ENCODE measurements at regions of chr15 and their contacts with region 1.

Region 1: DNA sequence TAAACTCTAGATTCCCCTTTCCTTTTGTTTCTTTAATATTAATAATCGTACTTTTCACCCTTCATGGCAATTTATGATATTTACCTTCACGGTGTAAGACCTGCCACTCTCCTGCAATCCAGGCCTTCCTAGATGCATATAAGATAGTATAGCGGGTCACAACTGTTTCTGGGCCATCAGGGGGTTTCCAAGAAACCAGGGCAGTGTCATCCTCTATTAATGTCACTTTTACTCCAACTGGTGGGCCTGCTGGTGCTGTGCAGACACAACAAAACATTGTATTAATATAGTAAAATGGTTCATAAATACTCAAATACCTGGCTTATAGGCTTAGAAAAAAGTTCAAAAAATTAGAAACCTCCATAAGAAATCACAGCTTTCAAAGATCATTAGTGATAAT is 48.9 kb upstream of the PYGO1 start:
- DNase-seq: no peak
- H3K4me3 ChIP-seq: no peak overlapping the region
- H3K27ac ChIP-seq: no peak overlapping the region
- H3K4me1 ChIP-seq: no peaks in the 10 kb centered on the region
- H3K27me3 ChIP-seq: no peaks in the 10 kb centered on the region
- CTCF ChIP-seq: no peak
- EP300 ChIP-seq: no peak
- POLR2A ChIP-seq: no peak

Region 2: GRCh38 chr15:55526559-55527036 is 110.5 kb before region 1 on chr15:
- intact Hi-C with region 1: loop called (anchors 2 kb)
- DNase-seq: no peak
- H3K4me3 ChIP-seq: no peak overlapping the region
- H3K27ac ChIP-seq: no peak overlapping the region
- H3K4me1 ChIP-seq: no peaks in the 10 kb centered on the region
- H3K27me3 ChIP-seq: no peaks in the 10 kb centered on the region
- CTCF ChIP-seq: peak in 3 of 4 experiments; percentile 28 to 54 (median 34)
- EP300 ChIP-seq: no peak
- POLR2A ChIP-seq: no peak

Region 3: GRCh38 chr15:55694652-55695150 is 57.6 kb after region 1 on chr15:
- intact Hi-C with region 1: no loop called
- DNase-seq: no peak
- H3K4me3 ChIP-seq: no peak overlapping the region
- H3K27ac ChIP-seq: no peak overlapping the region
- H3K4me1 ChIP-seq: no peaks in the 10 kb centered on the region
- H3K27me3 ChIP-seq: no peaks in the 10 kb centered on the region
- CTCF ChIP-seq: no peak
- EP300 ChIP-seq: no peak
- POLR2A ChIP-seq: no peak

Measured in sigmoid colon (tissue), 7 donors.